ENCODE measurements at regions of chr3 and their contacts with region 1.

Region 1: GRCh38 chr3:187616307-187616972 is 53.8 kb downstream of the SST start:
- DNase-seq: peak; percentile 67
- H3K4me3 Mint-ChIP-seq: no peak overlapping the region
- H3K27ac Mint-ChIP-seq: no peak overlapping the region
- H3K4me1 Mint-ChIP-seq: no peaks in the 10 kb centered on the region
- H3K27me3 Mint-ChIP-seq: peaks cover 9% of the 10 kb centered on the region

Region 2: GRCh38 chr3:187669675-187670504 is 53.5 kb after region 1 on chr3 and contains the start of gene SST:
- CTCF ChIA-PET with region 1: interaction called, 19 read pairs
- POLR2A ChIA-PET with region 1: no interaction called
- intact Hi-C with region 1: no loop called
- DNase-seq: peak; percentile 49
- H3K4me3 Mint-ChIP-seq: no peak within 1 kb of the TSS
- H3K27ac Mint-ChIP-seq: no peak within 1 kb of the TSS
- H3K4me1 Mint-ChIP-seq: peaks cover 6% of the 10 kb centered on the region
- H3K27me3 Mint-ChIP-seq: peaks cover 65% of the 10 kb centered on the region
- total RNA-seq, gene SST: not detected

Region 3: DNA sequence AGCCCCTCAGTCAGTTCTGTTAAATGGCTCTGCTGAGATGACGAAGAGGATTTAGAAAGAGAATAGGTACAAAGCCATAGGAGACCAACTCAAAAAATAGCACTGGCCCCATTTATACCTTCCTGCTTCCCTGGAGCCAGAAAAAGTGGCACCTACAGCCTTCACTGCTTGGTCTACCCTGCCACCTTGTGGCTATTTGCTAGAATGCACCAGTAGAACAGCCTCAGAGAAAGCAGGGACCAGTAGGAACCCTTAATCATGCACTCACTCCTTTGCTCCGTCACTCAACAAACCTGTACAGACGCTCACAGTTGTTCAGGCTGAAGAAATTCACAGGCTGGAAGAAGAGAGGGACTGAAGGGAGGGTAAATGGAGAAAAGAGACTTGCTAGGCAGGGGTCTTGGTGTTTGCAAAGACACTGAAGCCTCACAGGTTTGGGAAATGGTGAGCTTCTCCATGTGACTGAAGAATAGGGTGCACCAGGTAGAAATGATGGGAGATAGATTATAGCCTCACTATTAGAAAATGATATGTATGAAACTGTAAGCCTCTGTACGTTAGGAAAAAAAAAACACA is 98.1 kb after region 1 on chr3:
- CTCF ChIA-PET with region 1: interaction called, 53 read pairs
- POLR2A ChIA-PET with region 1: no interaction called
- intact Hi-C with region 1: loop called (anchors 1 kb)
- DNase-seq: peak; percentile 82
- H3K4me3 Mint-ChIP-seq: no peak overlapping the region
- H3K27ac Mint-ChIP-seq: no peak overlapping the region
- H3K4me1 Mint-ChIP-seq: peaks cover 12% of the 10 kb centered on the region
- H3K27me3 Mint-ChIP-seq: no peaks in the 10 kb centered on the region

Region 4: DNA sequence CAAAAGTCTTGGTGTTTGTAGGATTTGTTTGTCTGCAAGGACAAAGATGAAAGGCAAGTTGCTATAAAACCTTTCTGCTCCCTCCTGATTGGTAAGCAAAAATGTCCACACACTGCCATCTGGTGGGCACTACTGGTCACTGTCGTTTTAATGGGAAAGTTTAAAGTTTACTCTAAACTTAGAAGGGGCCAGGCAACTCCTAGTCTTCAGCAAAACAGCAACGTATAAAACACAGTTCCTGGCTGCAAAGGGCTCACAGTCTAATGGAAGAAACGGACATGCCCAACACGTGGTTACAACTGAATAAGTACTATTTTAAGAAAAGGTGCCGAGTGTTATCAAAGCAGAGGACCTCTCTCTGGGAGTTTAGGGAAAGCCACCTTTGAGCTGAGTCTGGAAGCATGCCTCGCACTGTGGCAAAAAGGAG is 1531.7 kb after region 1 on chr3:
- CTCF ChIA-PET with region 1: no interaction called
- POLR2A ChIA-PET with region 1: no interaction called
- intact Hi-C with region 1: loop called (anchors 5 kb)
- DNase-seq: peak; percentile 77
- H3K4me3 Mint-ChIP-seq: no peak overlapping the region
- H3K27ac Mint-ChIP-seq: no peak overlapping the region
- H3K4me1 Mint-ChIP-seq: peaks cover 19% of the 10 kb centered on the region
- H3K27me3 Mint-ChIP-seq: no peaks in the 10 kb centered on the region